Activated CD4-positive, alpha-beta T cell treated with anti-CD3 and anti-CD28 coated beads, Interleukin-2, amount 10 ng/mL, durations not matched to agents 24 days and 14 days (primary cell): ENCODE measurements at regions of chr3 and their contacts with region 1.

Region 1: DNA sequence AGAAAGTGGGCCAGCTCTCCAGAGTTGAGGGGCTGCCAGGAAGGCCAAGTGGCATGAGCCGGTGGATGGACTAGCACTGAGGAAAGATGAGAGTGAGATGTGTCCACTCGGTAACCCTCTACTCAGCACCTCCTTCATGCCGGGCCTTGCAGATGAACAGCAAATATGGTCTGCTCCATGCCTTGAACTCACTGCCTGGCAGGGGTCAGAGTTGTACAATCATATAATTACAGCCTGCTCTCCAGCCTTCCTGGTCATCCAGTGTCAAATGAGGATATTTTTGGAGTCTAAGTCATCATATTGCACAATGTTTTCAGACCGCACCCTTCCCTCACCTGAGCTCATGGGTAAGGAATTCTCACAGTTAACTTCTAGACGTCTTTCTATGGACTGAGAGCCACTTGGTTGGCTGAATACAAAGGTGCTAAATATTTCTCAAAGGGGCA is 4.9 kb downstream of the MGLL start:
- DNase-seq: no peak
- H3K4me3 Mint-ChIP-seq: no peak overlapping the region
- H3K27ac Mint-ChIP-seq: no peak overlapping the region
- H3K4me1 Mint-ChIP-seq: peaks cover 6% of the 10 kb centered on the region
- H3K27me3 Mint-ChIP-seq: peaks cover 36% of the 10 kb centered on the region

Region 2: GRCh38 chr3:127786353-127787070 is 30.9 kb before region 1 on chr3:
- intact Hi-C with region 1: loop called (anchors 2 kb)
- DNase-seq: no peak
- H3K4me3 Mint-ChIP-seq: no peak overlapping the region
- H3K27ac Mint-ChIP-seq: no peak overlapping the region
- H3K4me1 Mint-ChIP-seq: peaks cover 5% of the 10 kb centered on the region
- H3K27me3 Mint-ChIP-seq: peaks cover 5% of the 10 kb centered on the region

Region 3: GRCh38 chr3:127800508-127800907 is 16.9 kb before region 1 on chr3:
- intact Hi-C with region 1: no loop called
- DNase-seq: peak; percentile 74
- H3K4me3 Mint-ChIP-seq: peak overlapping the region; percentile 41
- H3K27ac Mint-ChIP-seq: peak overlapping the region; percentile 85
- H3K4me1 Mint-ChIP-seq: peaks cover 10% of the 10 kb centered on the region
- H3K27me3 Mint-ChIP-seq: no peaks in the 10 kb centered on the region